Breast epithelium (tissue), 4 donors: ENCODE measurements at regions of chr7 and their contacts with region 1.

Region 1: DNA sequence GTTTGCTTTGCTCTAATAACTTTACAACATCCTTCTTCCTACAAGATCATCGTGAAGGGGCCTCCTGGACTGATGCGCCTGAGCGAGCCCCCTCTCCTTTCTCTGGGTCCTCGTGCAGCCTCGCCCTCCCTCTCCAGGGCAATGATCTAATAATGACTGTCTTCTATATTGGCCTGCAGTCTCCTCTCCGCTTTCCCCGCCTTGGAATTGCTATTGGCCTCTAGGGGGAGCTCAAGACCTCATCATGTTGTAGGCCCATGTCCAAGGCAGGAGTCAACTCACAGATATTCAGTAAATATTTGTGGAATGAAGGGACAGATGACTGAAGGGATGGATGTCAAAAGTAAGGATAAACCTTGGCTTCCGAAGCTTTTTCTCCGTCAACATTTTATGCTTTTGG is 1180.3 kb downstream of the TYW1 start:
- DNase-seq: no peak
- H3K4me3 ChIP-seq: no peak overlapping the region
- H3K27ac ChIP-seq: no peak overlapping the region
- H3K4me1 ChIP-seq: no peaks in the 10 kb centered on the region
- H3K27me3 ChIP-seq: no peaks in the 10 kb centered on the region
- CTCF ChIP-seq: peak in 2 of 3 donors; percentile 44 to 52
- POLR2A ChIP-seq: no peak

Region 2: GRCh38 chr7:69104023-69104422 is 927.0 kb after region 1 on chr7:
- intact Hi-C with region 1: loop called (anchors 5 kb)
- DNase-seq: no peak
- H3K4me3 ChIP-seq: no peak overlapping the region
- H3K27ac ChIP-seq: no peak overlapping the region
- H3K4me1 ChIP-seq: no peaks in the 10 kb centered on the region
- H3K27me3 ChIP-seq: no peaks in the 10 kb centered on the region
- CTCF ChIP-seq: no peak
- POLR2A ChIP-seq: no peak